Mucosa of descending colon (tissue), 3 donors: ENCODE measurements at regions of chr3 and their contacts with region 1.

Region 1: GRCh38 chr3:193564012-193564411 is 9.3 kb upstream of the ATP13A4 start:
- DNase-seq: peak in 2 of 3 donors; percentile 57 to 71
- ATAC-seq: peak; percentile 96
- H3K4me3 ChIP-seq: no peak overlapping the region
- H3K4me1 ChIP-seq: no peaks in the 10 kb centered on the region
- CTCF ChIP-seq: peak; percentile 11

Region 2: GRCh38 chr3:193190146-193190786 is 373.7 kb before region 1 on chr3:
- intact Hi-C with region 1: no loop called
- DNase-seq: peak in 1 of 3 donors; percentile 49
- ATAC-seq: peak; percentile 49
- H3K4me3 ChIP-seq: no peak overlapping the region
- H3K4me1 ChIP-seq: no peaks in the 10 kb centered on the region
- CTCF ChIP-seq: no peak

Region 3: GRCh38 chr3:193464889-193465288 is 99.1 kb before region 1 on chr3:
- intact Hi-C with region 1: loop called in 1 of 2 experiments (anchors 5 kb)
- DNase-seq: no peak
- ATAC-seq: no peak
- H3K4me3 ChIP-seq: no peak overlapping the region
- H3K4me1 ChIP-seq: peaks cover 6% of the 10 kb centered on the region
- CTCF ChIP-seq: no peak

Region 4: GRCh38 chr3:193620650-193621049 is 56.6 kb after region 1 on chr3:
- intact Hi-C with region 1: no loop called
- DNase-seq: no peak
- ATAC-seq: no peak
- H3K4me3 ChIP-seq: no peak overlapping the region
- H3K4me1 ChIP-seq: no peaks in the 10 kb centered on the region
- CTCF ChIP-seq: no peak